Endothelial cell of umbilical vein (primary cell): ENCODE measurements at regions of chr7 and their contacts with region 1.

Region 1: GRCh38 chr7:117639966-117640365 is 160.1 kb downstream of the CFTR start:
- DNase-seq: peak; percentile 69
- H3K4me3 ChIP-seq: no peak overlapping the region
- H3K27ac ChIP-seq: no peak overlapping the region
- H3K4me1 ChIP-seq: peaks cover 19% of the 10 kb centered on the region
- H3K27me3 ChIP-seq: no peaks in the 10 kb centered on the region
- CTCF ChIP-seq: no peak
- POLR2A ChIP-seq: no peak

Region 2: DNA sequence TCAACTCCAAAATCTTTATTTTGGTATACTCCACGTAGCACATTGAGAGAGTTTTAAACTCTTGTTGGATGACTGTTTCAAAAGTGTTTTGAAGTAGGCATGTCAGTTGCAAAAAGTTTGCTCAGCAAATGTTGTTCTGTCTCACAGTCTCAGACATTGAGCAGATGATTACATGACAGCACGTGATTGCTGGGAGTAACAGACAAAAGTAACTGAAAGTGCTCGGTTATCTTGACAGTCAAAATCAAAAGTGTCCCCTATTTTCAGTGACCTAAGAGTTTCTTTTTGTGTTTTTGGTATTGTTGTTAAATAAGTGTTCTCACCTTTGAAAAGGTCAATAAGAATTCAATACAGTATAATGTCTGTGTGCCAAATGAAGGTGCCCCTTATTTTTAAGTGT is 75.9 kb before region 1 on chr7:
- CTCF ChIA-PET with region 1: no interaction called
- POLR2A ChIA-PET with region 1: no interaction called
- dilution Hi-C with region 1: no loop called
- intact Hi-C with region 1: no loop called
- DNase-seq: no peak
- H3K4me3 ChIP-seq: no peak overlapping the region
- H3K27ac ChIP-seq: no peak overlapping the region
- H3K4me1 ChIP-seq: no peaks in the 10 kb centered on the region
- H3K27me3 ChIP-seq: no peaks in the 10 kb centered on the region
- CTCF ChIP-seq: no peak
- POLR2A ChIP-seq: no peak

Region 3: GRCh38 chr7:117587939-117588338 is 52.0 kb before region 1 on chr7:
- CTCF ChIA-PET with region 1: no interaction called
- POLR2A ChIA-PET with region 1: no interaction called
- dilution Hi-C with region 1: no loop called
- intact Hi-C with region 1: loop called (anchors 2 kb)
- DNase-seq: no peak
- H3K4me3 ChIP-seq: no peak overlapping the region
- H3K27ac ChIP-seq: no peak overlapping the region
- H3K4me1 ChIP-seq: peaks cover 10% of the 10 kb centered on the region
- H3K27me3 ChIP-seq: no peaks in the 10 kb centered on the region
- CTCF ChIP-seq: no peak
- POLR2A ChIP-seq: no peak

Region 4: GRCh38 chr7:117600911-117601310 is 39.1 kb before region 1 on chr7:
- CTCF ChIA-PET with region 1: no interaction called
- POLR2A ChIA-PET with region 1: no interaction called
- dilution Hi-C with region 1: no loop called
- intact Hi-C with region 1: loop called (anchors 2 kb)
- DNase-seq: peak; percentile 71
- H3K4me3 ChIP-seq: peak overlapping the region in 1 of 3 experiments; percentile 19
- H3K27ac ChIP-seq: peak overlapping the region; percentile 82
- H3K4me1 ChIP-seq: peaks cover 22% of the 10 kb centered on the region
- H3K27me3 ChIP-seq: no peaks in the 10 kb centered on the region
- CTCF ChIP-seq: no peak
- POLR2A ChIP-seq: no peak

Region 5: DNA sequence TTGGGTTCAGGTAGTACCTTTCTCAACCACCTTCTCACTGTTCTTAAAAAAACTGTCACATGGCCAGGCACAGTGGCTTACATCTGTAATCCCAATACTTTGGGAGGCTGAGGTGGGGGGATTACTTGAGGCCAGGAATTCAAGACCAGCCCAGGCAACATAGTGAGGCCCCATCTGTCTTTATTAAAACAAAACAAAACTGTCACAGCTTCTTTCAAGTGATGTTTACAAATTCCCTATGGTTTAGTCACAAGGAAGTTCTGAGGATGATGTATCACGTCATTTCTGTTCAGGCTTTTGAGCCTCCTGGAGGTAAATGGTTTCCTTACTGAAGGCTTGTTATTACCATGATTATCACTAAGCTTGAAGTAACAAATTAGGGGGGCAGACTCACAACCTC is 26.1 kb after region 1 on chr7:
- CTCF ChIA-PET with region 1: interaction called, 3 read pairs
- POLR2A ChIA-PET with region 1: no interaction called
- dilution Hi-C with region 1: no loop called
- intact Hi-C with region 1: loop called (anchors 1 kb)
- DNase-seq: peak; percentile 67
- H3K4me3 ChIP-seq: no peak overlapping the region
- H3K27ac ChIP-seq: peak overlapping the region; percentile 62
- H3K4me1 ChIP-seq: peaks cover 14% of the 10 kb centered on the region
- H3K27me3 ChIP-seq: no peaks in the 10 kb centered on the region
- CTCF ChIP-seq: no peak
- POLR2A ChIP-seq: no peak